MCF 10A (cell line): ENCODE measurements at regions of chr9 and their contacts with region 1.

Region 1: GRCh38 chr9:69174616-69175463 is 763 bp downstream of the TJP2 start:
- DNase-seq: peak; percentile 96
- H3K4me3 Mint-ChIP-seq: peak overlapping the region; percentile 93
- H3K27ac Mint-ChIP-seq: peak overlapping the region; percentile 94
- H3K4me1 Mint-ChIP-seq: peaks cover 44% of the 10 kb centered on the region
- H3K27me3 Mint-ChIP-seq: no peaks in the 10 kb centered on the region
- CTCF ChIP-seq: no peak

Region 2: DNA sequence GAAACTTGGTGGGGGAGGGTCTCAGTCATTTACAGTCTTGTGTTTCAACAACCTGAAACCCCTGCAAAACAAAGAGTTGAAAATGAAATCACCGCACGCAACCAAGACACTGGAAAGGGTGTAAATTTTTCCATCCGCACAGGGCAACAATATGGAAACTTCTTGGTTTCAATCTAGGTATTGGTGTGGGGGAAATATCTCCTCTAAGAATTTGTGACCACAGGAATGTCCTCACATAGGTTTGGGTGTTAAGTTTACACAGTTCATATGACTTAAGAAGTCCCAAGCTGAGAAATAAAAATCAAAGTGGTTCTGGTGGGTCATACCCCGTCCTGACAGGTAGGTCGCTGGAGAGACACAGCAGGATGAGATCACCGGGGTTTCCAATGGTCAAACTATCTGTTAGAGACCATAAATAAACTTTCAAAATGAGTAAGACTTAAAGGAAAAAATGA is 521.7 kb before region 1 on chr9:
- CTCF ChIA-PET with region 1: no interaction called
- POLR2A ChIA-PET with region 1: no interaction called
- intact Hi-C with region 1: no loop called
- DNase-seq: no peak
- H3K4me3 Mint-ChIP-seq: no peak overlapping the region
- H3K27ac Mint-ChIP-seq: no peak overlapping the region
- H3K4me1 Mint-ChIP-seq: no peaks in the 10 kb centered on the region
- H3K27me3 Mint-ChIP-seq: peaks cover 38% of the 10 kb centered on the region
- CTCF ChIP-seq: no peak

Region 3: DNA sequence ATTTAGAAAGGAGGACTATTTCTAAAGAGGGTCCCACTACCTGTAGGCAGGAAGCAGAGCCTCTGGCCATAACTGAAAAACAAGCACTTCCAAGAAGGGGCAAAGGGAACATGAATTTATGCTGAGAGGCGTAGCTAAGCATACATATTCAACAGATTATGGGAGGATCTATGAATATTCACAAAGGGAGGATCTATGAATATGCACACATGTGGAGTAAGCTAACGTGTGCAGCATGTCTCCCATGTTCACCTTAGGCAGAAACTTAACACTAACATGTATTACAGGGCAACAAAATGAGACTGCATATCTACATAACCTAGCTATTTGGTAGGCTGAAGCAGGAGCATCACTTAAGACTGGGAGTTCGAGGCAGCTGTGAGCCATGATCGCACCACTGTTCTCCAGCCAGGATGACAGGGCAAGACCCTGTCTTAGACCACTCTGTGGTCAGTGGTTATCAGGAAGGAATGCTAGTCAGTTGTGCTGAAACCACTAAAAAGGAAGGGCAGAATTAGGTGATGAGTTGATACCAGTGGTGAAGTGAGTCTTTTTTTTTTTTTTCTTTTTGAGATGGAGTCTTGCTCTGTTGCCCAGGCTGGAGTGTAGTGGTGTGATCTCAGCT is 118.5 kb before region 1 on chr9:
- CTCF ChIA-PET with region 1: interaction called, 13 read pairs
- POLR2A ChIA-PET with region 1: interaction called, 4 read pairs
- intact Hi-C with region 1: no loop called
- DNase-seq: no peak
- H3K4me3 Mint-ChIP-seq: no peak overlapping the region
- H3K27ac Mint-ChIP-seq: peak overlapping the region; percentile 69
- H3K4me1 Mint-ChIP-seq: no peaks in the 10 kb centered on the region
- H3K27me3 Mint-ChIP-seq: no peaks in the 10 kb centered on the region
- CTCF ChIP-seq: no peak

Region 4: DNA sequence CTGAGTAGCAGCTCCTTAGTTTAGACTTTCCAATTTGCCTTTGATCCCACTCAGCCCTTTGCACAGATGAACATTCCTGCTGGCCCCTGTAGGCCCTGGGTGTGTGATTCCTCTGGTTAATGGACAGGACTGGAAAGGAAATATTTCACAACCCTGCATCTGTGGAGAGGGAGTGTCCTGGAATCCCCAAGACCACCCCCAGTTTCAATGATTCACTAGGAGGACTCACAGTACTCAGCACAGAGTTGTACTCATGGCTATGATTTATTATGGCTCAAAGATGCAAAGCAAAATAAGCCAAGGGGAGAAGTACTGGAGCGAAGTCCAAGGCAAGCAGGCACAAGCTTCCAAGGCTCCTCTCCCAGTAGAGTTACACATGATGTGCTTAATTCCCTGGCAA is 43.2 kb before region 1 on chr9:
- CTCF ChIA-PET with region 1: interaction called, 4 read pairs
- POLR2A ChIA-PET with region 1: interaction called, 86 read pairs
- intact Hi-C with region 1: loop called (anchors 1 kb)
- DNase-seq: peak; percentile 93
- H3K4me3 Mint-ChIP-seq: peak overlapping the region; percentile 0
- H3K27ac Mint-ChIP-seq: peak overlapping the region; percentile 77
- H3K4me1 Mint-ChIP-seq: peaks cover 33% of the 10 kb centered on the region
- H3K27me3 Mint-ChIP-seq: no peaks in the 10 kb centered on the region
- CTCF ChIP-seq: no peak

Region 5: DNA sequence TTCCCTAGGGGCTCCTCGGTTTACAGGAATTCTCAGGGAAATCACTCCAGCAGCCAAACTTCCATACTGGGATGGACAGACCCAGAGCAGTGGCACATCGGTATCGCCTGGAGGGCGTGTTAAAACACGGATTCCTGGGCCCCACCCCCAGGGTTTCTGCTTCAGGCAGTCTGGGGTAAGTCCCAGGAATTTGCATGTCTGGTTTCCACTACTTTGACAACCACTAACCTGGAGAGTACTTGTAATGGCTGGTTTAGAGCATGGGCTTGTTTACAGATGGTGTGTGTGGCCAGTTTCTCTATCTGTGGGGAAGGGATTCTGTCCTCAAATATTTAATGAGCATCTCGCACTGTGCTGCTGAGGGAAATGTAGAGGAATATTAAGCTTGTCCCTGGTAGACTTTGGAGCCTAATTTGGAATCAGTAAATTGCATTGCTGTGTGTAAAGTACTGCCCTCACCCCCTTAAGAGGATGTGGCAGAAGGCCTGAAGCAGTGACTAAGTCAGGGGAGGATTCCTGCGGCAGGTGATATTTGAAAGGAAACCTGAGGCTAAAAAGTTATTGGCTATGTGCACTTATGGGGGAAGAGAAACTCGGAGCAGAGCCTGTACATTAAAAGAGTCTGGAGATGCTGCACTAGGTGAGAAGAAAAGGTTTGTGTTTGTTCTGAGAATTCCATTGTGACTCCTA is 19.4 kb before region 1 on chr9:
- CTCF ChIA-PET with region 1: interaction called, 6 read pairs
- POLR2A ChIA-PET with region 1: interaction called, 25 read pairs
- intact Hi-C with region 1: no loop called
- DNase-seq: no peak
- H3K4me3 Mint-ChIP-seq: no peak overlapping the region
- H3K27ac Mint-ChIP-seq: peak overlapping the region; percentile 73
- H3K4me1 Mint-ChIP-seq: peaks cover 10% of the 10 kb centered on the region
- H3K27me3 Mint-ChIP-seq: no peaks in the 10 kb centered on the region
- CTCF ChIP-seq: no peak

Region 6: DNA sequence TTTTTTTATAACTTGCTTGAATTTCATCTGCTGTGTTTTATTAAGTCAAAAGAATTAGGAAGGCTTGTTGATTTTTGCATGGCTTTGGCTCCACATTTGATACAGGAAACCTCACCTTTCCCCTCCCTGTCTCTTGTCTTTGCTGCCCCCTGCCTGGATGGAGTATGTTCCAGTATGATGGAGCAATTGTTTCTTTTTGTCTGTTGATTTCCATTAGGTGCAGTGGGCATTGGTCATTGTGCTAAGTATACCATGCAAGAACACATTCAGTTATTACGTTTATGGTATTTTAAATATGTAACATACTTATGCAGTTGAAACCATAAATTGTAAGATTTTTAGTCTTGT is 18.8 kb after region 1 on chr9:
- CTCF ChIA-PET with region 1: interaction called, 81 read pairs
- POLR2A ChIA-PET with region 1: interaction called, 18 read pairs
- intact Hi-C with region 1: no loop called
- DNase-seq: no peak
- H3K4me3 Mint-ChIP-seq: no peak overlapping the region
- H3K27ac Mint-ChIP-seq: no peak overlapping the region
- H3K4me1 Mint-ChIP-seq: no peaks in the 10 kb centered on the region
- H3K27me3 Mint-ChIP-seq: no peaks in the 10 kb centered on the region
- CTCF ChIP-seq: no peak

Region 7: GRCh38 chr9:69370430-69370829 is 195.6 kb after region 1 on chr9:
- CTCF ChIA-PET with region 1: no interaction called
- POLR2A ChIA-PET with region 1: no interaction called
- intact Hi-C with region 1: no loop called
- DNase-seq: peak; percentile 35
- H3K4me3 Mint-ChIP-seq: no peak overlapping the region
- H3K27ac Mint-ChIP-seq: no peak overlapping the region
- H3K4me1 Mint-ChIP-seq: no peaks in the 10 kb centered on the region
- H3K27me3 Mint-ChIP-seq: peaks cover 26% of the 10 kb centered on the region
- CTCF ChIP-seq: no peak